T-cell (primary cell): ENCODE measurements at regions of chr16 and their contacts with region 1.

Region 1: DNA sequence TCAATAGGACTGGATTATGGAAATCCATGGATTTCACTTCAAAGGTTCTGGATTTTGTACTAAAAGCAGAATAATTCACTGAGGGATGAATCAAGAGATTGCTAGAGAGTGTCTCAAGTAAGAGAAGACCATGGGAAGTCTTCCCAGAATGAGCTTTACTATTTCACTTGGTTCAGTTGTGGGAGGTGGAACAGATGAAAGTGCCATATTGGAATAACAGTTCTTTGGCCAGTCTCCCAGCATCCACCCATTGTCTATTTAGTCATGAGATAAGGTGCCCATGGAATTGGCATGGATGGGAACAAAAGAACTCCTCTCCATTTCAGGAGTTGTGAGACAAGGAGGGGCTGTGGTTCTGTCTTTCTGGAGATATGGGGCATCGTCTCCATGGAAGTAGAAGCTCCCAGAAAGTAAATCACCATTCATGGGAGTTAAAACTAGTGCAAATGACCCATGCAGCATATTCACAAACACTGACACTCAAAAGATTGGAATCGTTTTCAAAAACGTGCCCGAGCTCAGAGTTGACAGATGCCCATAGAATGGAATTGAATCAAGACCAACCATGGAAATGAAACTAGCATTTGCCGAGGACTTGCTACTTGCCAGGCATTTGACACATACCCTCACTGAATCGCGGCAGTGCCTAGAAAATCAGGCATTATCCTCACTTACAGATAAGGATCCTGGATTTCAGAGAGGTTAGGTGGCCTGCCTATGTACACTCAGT is 36.2 kb upstream of the CLEC3A start:
- DNase-seq: no peak
- ATAC-seq: no peak
- H3K4me3 ChIP-seq: no peak overlapping the region
- H3K4me3 Mint-ChIP-seq: no peak overlapping the region
- H3K27ac ChIP-seq: no peak overlapping the region
- H3K27ac Mint-ChIP-seq: no peak overlapping the region
- H3K4me1 ChIP-seq: no peaks in the 10 kb centered on the region
- H3K4me1 Mint-ChIP-seq: no peaks in the 10 kb centered on the region
- H3K27me3 ChIP-seq: no peaks in the 10 kb centered on the region
- H3K27me3 Mint-ChIP-seq: peaks cover 1 to 18% of the 10 kb centered on the region in 2 donors

Region 2: DNA sequence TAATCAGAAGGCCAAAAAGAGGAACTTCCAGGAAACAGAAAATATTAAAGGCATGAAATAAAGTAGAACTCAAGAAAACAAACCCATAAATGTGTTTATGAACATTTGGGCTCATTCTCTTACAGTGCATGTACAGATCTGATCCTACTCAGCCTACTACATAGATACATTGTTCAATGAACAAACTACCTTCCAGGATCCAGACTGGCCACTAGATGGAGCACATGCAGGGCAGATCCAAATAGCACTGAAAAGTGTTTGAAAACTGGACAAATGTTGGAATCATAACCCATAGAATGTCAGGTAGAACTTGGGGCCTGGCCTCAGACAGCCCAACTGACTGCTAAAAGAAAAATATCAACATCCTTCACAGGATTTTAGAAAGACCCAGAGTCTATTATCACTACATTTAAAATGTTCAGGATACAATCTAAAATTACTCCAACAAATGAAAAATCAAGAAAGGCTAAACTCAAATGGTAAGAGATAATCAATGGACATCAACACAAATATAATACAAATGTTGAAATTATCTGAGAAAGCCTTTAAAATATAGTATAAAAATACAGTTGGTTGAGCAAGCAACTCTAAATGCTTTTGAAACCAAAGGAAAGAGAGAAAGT is 386.3 kb before region 1 on chr16:
- CTCF ChIA-PET with region 1: no interaction called
- POLR2A ChIA-PET with region 1: interaction called in 1 of 2 experiments, 10 read pairs
- DNase-seq: peak in 1 of 35 experiments; percentile 6
- ATAC-seq: no peak
- H3K4me3 ChIP-seq: no peak overlapping the region
- H3K4me3 Mint-ChIP-seq: no peak overlapping the region
- H3K27ac ChIP-seq: no peak overlapping the region
- H3K27ac Mint-ChIP-seq: no peak overlapping the region
- H3K4me1 ChIP-seq: no peaks in the 10 kb centered on the region
- H3K4me1 Mint-ChIP-seq: no peaks in the 10 kb centered on the region
- H3K27me3 ChIP-seq: peaks cover 0 to 6% of the 10 kb centered on the region in 2 experiments
- H3K27me3 Mint-ChIP-seq: peaks cover 12% of the 10 kb centered on the region in 2 donors